GM12878 (cell line): ENCODE measurements at regions of chr1 and their contacts with region 1.

Region 1: GRCh38 chr1:204746838-204747442 is 61.4 kb upstream of the LRRN2 start:
- DNase-seq: no peak
- ATAC-seq: peak; percentile 94
- H3K4me3 ChIP-seq: no peak overlapping the region
- H3K27ac ChIP-seq: no peak overlapping the region
- H3K4me1 ChIP-seq: no peaks in the 10 kb centered on the region
- H3K27me3 ChIP-seq: peaks cover 0 to 1% of the 10 kb centered on the region in 2 experiments; a peak in 1 of 4 replicates
- CTCF ChIP-seq: peak; percentile 78 to 97 (median 97)
- EP300 ChIP-seq: no peak
- POLR2A ChIP-seq: no peak
- RAD21 ChIP-seq: peak; percentile 48

Region 2: DNA sequence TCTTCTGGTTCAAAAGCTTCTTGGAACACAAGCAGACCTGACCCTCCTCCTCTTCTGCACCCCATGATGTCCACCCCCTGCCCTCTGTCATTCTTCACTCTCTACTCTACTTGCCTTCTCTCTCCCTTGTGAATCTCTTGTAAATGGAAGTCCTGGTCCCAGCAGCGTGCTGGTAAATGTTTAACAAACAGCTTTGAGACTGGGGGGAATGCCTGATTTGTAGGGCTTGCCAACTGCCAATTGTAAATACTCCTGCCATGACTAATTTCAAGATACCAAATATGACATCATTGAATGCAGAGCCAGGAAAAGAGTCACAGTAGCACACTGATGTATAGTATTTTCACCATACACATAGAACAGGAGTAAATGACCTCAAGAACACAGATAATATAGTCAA is 20.5 kb before region 1 on chr1:
- CTCF ChIA-PET with region 1: interaction called, 17 read pairs
- POLR2A ChIA-PET with region 1: no interaction called
- RAD21 ChIA-PET with region 1: interaction called, 5 read pairs
- SMC1A ChIA-PET with region 1: interaction called, 7 read pairs
- in situ Hi-C with region 1: no loop called
- intact Hi-C with region 1: no loop called
- DNase-seq: no peak
- ATAC-seq: peak; percentile 74
- H3K4me3 ChIP-seq: no peak overlapping the region
- H3K27ac ChIP-seq: no peak overlapping the region
- H3K4me1 ChIP-seq: no peaks in the 10 kb centered on the region
- H3K27me3 ChIP-seq: no peaks in the 10 kb centered on the region; a peak in 1 of 4 replicates
- CTCF ChIP-seq: no peak
- EP300 ChIP-seq: no peak
- POLR2A ChIP-seq: no peak
- RAD21 ChIP-seq: no peak

Region 3: DNA sequence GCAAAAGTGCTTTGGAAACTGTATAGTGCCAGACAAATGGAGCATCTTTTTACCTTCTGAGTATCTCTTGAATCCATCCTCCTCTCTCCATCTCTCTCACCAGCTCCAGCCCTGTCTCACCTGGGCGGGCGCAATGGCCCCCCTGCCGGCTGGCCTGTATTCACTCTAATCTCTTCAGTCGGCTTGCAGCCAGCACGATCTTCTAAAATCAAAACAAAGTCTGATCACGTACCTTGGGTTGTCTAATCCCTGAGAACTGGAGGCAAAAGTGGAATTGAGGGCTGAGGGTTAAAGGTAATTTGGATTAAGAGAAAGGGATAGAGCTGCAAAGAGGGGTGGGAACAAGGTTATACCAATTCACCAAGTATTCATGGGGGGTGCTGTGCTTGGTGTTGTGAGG is 15.4 kb before region 1 on chr1:
- CTCF ChIA-PET with region 1: interaction called, 14 read pairs
- POLR2A ChIA-PET with region 1: no interaction called
- RAD21 ChIA-PET with region 1: no interaction called
- SMC1A ChIA-PET with region 1: interaction called, 7 read pairs
- in situ Hi-C with region 1: no loop called
- intact Hi-C with region 1: no loop called
- DNase-seq: no peak
- ATAC-seq: no peak
- H3K4me3 ChIP-seq: no peak overlapping the region
- H3K27ac ChIP-seq: no peak overlapping the region
- H3K4me1 ChIP-seq: no peaks in the 10 kb centered on the region
- H3K27me3 ChIP-seq: no peaks in the 10 kb centered on the region; a peak in 1 of 4 replicates
- CTCF ChIP-seq: no peak
- EP300 ChIP-seq: no peak
- POLR2A ChIP-seq: no peak
- RAD21 ChIP-seq: no peak

Region 4: DNA sequence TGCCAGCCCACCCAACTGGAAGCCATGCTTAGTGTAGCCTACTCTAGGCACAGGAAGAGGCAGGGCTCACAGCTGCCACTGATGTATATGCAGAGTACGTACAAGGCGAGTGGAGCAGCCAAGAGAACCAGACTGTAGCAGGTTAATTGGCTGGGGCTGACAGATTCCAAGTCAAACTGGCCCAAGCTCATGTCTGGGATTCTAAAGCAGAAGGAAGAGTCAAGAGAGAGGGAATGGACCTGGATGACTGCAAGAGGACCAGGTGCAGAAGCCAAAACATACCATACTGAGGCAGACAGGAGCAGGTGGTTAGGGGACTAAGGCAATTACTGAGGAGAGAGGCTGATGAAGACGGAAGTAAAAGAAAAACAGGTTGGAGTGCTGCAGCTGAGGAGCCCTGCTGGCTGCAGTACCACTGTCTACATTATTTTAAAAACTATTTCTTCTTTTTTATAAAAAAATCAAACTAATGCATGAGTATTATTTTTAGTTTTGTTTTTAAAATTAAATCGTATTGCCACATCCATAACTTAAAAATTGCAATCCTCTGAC is 10.0 kb before region 1 on chr1:
- CTCF ChIA-PET with region 1: interaction called, 14 read pairs
- POLR2A ChIA-PET with region 1: no interaction called
- RAD21 ChIA-PET with region 1: interaction called, 3 read pairs
- SMC1A ChIA-PET with region 1: interaction called, 7 read pairs
- in situ Hi-C with region 1: no loop called
- intact Hi-C with region 1: no loop called
- DNase-seq: no peak
- ATAC-seq: 0 out of 3 replicates have a peak, but pooled peaks have one; percentile 24
- H3K4me3 ChIP-seq: no peak overlapping the region
- H3K27ac ChIP-seq: no peak overlapping the region
- H3K4me1 ChIP-seq: no peaks in the 10 kb centered on the region
- H3K27me3 ChIP-seq: no peaks in the 10 kb centered on the region
- CTCF ChIP-seq: no peak
- EP300 ChIP-seq: no peak
- POLR2A ChIP-seq: no peak
- RAD21 ChIP-seq: no peak